Mammary epithelial cell (primary cell): ENCODE measurements at regions of chr2 and their contacts with region 1.

Region 1: GRCh38 chr2:24075915-24076848 is at the start of gene SF3B6:
- DNase-seq: peak; percentile 100
- H3K4me3 ChIP-seq: peak within 1 kb of the TSS; percentile 90 to 95 (median 94)
- H3K27ac ChIP-seq: peak within 1 kb of the TSS; percentile 92
- H3K4me1 ChIP-seq: peaks cover 12% of the 10 kb centered on the region
- H3K27me3 ChIP-seq: no peaks in the 10 kb centered on the region
- CTCF ChIP-seq: no peak
- total RNA-seq, gene SF3B6: 101 to 106 TPM

Region 2: GRCh38 chr2:22737144-22737543 is 1339.0 kb before region 1 on chr2:
- CTCF ChIA-PET with region 1: no interaction called
- dilution Hi-C with region 1: no loop called
- in situ Hi-C with region 1: no loop called
- intact Hi-C with region 1: no loop called
- DNase-seq: no peak
- H3K4me3 ChIP-seq: no peak overlapping the region
- H3K27ac ChIP-seq: no peak overlapping the region
- H3K4me1 ChIP-seq: no peaks in the 10 kb centered on the region
- H3K27me3 ChIP-seq: no peaks in the 10 kb centered on the region
- CTCF ChIP-seq: no peak

Region 3: DNA sequence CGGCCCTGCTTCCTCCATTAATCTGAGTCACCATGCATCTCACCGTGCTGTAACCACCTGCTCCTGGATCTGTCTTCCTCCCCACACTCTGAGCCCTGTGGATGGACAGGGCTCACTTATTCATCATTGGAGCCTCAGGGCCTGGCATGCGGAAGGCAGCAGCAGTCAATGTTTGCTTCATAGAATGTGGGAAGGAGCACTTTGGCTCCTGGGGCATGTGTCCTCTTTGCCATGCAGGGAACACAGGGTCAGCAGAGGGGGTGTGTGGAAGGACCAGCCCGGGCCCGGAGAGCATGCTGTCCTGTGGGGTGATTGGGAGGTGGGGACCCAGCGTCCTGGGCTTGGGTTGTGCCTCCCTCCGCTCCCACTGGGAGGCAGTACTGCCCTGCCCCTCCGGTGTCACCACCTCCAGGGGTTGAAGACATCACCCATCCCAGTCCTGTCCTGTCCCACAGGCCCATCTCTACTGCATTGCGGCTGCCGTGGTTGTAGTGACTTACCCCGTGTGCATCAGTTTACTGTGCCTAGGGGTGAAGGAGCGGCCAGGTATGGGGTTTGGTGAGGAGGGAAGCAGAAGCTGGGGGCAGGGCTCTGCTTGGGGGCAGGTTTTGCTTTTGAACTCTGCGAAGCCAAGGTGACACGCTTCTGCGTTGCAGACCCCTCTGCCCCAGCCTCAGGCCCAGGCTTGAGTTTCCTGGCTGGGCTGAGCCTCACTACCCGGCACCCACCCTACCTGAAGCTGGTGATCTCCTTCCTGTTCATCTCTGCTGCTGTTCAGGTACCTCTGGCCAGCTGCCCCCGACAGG is 54.8 kb before region 1 on chr2:
- CTCF ChIA-PET with region 1: no interaction called
- dilution Hi-C with region 1: no loop called
- in situ Hi-C with region 1: no loop called
- intact Hi-C with region 1: loop called (anchors 2 kb)
- DNase-seq: peak; percentile 79
- H3K4me3 ChIP-seq: no peak overlapping the region
- H3K27ac ChIP-seq: no peak overlapping the region
- H3K4me1 ChIP-seq: peaks cover 16% of the 10 kb centered on the region
- H3K27me3 ChIP-seq: no peaks in the 10 kb centered on the region
- CTCF ChIP-seq: peak; percentile 22 to 49

Region 4: GRCh38 chr2:24046930-24047702 is 29.1 kb before region 1 on chr2 and contains the start of gene WDCP:
- CTCF ChIA-PET with region 1: interaction called, 3 read pairs
- dilution Hi-C with region 1: no loop called
- in situ Hi-C with region 1: no loop called
- intact Hi-C with region 1: loop called (anchors 1 kb)
- DNase-seq: peak; percentile 98
- H3K4me3 ChIP-seq: peak within 1 kb of the TSS; percentile 62 to 72 (median 62)
- H3K27ac ChIP-seq: peak within 1 kb of the TSS; percentile 17
- H3K4me1 ChIP-seq: peaks cover 8% of the 10 kb centered on the region
- H3K27me3 ChIP-seq: no peaks in the 10 kb centered on the region
- CTCF ChIP-seq: no peak
- total RNA-seq, gene WDCP: 9.0 to 10.1 TPM

Region 5: GRCh38 chr2:24164125-24164973 is 88.2 kb after region 1 on chr2:
- CTCF ChIA-PET with region 1: no interaction called
- dilution Hi-C with region 1: no loop called
- in situ Hi-C with region 1: no loop called
- intact Hi-C with region 1: loop called (anchors 1 kb)
- DNase-seq: no peak
- H3K4me3 ChIP-seq: no peak overlapping the region
- H3K27ac ChIP-seq: no peak overlapping the region
- H3K4me1 ChIP-seq: no peaks in the 10 kb centered on the region
- H3K27me3 ChIP-seq: no peaks in the 10 kb centered on the region
- CTCF ChIP-seq: peak; percentile 49 to 69